ENCODE measurements at regions of chr7 and their contacts with region 1.

Region 1: DNA sequence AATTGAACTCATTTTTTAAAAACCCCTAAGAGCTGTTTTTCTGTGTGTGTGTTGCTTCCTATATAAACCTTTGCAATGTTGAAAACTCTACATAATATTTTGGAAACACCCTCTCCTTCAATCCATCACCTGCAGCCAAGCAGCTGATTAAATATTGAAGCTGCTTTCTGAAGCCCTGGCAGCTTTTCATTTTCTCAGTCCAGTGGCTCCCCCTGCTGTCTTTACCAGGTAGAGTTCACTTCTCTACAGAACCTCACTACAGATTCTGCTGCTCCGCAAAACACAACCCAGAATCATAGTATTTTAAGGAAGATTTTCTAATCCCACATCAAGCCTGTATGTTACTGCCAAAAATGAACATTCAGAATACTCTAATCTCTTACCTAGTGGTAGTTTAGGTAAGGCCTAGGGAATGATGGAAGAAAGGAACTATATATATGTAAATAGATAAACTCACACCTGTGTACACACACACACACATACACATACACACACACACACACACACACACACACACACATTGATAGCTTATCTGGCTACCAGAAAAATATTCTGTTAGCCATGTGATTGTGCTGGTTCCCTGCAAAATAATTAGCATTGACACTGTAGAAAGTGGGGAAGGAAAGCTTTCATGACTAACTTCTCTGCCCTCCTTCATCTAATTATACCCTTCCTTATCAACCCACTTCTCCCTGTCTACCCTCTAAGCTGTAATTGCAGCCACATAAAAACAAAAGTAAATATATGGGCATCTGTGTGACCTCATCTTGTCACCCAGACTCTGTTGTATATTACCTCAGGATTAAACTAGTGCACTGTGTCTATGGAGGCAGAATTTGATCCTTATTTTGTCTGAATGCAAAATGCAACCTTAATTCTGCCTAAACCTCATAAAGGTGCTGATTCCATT is 229.5 kb upstream of the FZD1 start:
- DNase-seq: peak; percentile 65
- ATAC-seq: peak; percentile 63
- H3K4me3 ChIP-seq: no peak overlapping the region
- H3K27ac ChIP-seq: no peak overlapping the region
- H3K4me1 ChIP-seq: no peaks in the 10 kb centered on the region
- H3K27me3 ChIP-seq: no peaks in the 10 kb centered on the region
- CTCF ChIP-seq: peak; percentile 81

Region 2: DNA sequence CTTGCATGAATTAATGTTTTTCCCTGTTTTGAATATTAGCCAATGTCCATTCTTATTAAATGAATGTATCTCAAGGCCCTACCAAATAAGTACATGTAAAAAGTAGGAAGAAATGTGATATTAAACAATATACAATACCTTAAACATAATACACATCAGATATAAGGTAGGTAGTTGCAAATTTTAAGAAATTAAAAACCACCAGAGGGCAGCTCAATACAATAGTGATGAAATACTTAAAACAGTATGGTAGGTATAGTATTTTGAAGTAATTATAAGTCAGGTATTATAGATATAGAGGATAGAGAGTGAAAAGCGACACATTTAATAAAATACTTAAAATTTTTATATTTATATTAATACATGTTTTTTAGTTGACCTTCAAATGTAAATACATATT is 482.2 kb before region 1 on chr7:
- CTCF ChIA-PET with region 1: no interaction called
- POLR2A ChIA-PET with region 1: no interaction called
- intact Hi-C with region 1: loop called (anchors 1 kb)
- DNase-seq: peak; percentile 61
- ATAC-seq: peak; percentile 79
- H3K4me3 ChIP-seq: no peak overlapping the region
- H3K27ac ChIP-seq: no peak overlapping the region
- H3K4me1 ChIP-seq: peaks cover 6% of the 10 kb centered on the region; the same call in 1 of the 2 replicates
- H3K27me3 ChIP-seq: no peaks in the 10 kb centered on the region
- CTCF ChIP-seq: peak; percentile 53; the same call in 1 of the 2 replicates

Region 3: GRCh38 chr7:90690159-90690858 is 344.4 kb before region 1 on chr7:
- CTCF ChIA-PET with region 1: interaction called, 4 read pairs
- POLR2A ChIA-PET with region 1: no interaction called
- intact Hi-C with region 1: loop called (anchors 10 kb)
- DNase-seq: no peak
- ATAC-seq: no peak
- H3K4me3 ChIP-seq: no peak overlapping the region
- H3K27ac ChIP-seq: no peak overlapping the region
- H3K4me1 ChIP-seq: peaks cover 12% of the 10 kb centered on the region
- H3K27me3 ChIP-seq: no peaks in the 10 kb centered on the region
- CTCF ChIP-seq: no peak

Region 4: GRCh38 chr7:90931986-90932916 is 102.5 kb before region 1 on chr7:
- CTCF ChIA-PET with region 1: no interaction called
- POLR2A ChIA-PET with region 1: no interaction called
- intact Hi-C with region 1: no loop called
- DNase-seq: no peak
- ATAC-seq: no peak
- H3K4me3 ChIP-seq: no peak overlapping the region
- H3K27ac ChIP-seq: no peak overlapping the region
- H3K4me1 ChIP-seq: no peaks in the 10 kb centered on the region
- H3K27me3 ChIP-seq: no peaks in the 10 kb centered on the region
- CTCF ChIP-seq: no peak

Region 5: DNA sequence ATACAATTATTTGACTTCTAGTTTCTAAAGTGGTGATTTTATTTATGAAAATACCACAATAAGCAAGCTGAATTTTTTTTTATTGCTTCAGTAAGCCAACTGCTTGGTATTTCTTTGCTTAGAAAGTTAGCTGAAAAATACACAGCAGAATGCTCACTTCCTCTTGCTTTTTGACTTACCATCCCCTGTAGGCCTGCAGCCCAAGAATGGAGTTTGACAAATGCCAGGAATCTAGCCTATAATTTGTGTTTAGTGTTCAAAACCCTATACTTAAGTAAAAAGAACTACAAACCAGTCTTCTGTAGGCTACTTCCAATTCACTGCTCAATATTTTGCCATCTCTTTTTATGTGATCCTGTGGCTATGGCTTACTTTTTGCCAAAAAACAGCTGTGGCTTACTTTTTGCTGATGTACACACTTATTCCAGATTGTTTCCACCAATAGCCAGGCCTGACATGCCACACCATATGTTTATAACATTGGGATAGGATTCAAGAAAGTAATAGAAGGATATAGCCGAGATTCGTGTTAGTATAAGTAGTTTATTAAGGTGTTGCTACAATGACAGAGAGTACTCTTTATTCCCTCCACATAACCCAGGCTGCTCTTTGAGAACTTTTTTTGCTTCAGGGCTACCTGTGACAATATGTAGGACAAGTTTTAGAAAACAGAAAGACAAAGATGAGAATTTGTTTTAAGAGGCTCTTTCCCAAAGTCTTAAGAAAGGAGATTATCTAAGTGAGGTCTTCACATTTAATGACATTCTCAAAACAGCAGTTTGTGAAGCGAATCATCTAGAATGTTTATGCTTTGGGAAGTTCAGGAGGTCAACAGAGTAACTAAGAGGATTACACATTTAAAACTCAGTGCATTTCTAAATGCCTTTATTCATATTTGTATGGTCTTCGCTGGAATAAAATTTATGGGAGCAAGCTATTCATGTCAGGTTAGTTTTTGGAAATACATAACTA is 34.4 kb before region 1 on chr7:
- CTCF ChIA-PET with region 1: no interaction called
- POLR2A ChIA-PET with region 1: no interaction called
- intact Hi-C with region 1: no loop called
- DNase-seq: peak; percentile 39
- ATAC-seq: peak; percentile 31
- H3K4me3 ChIP-seq: no peak overlapping the region
- H3K27ac ChIP-seq: no peak overlapping the region
- H3K4me1 ChIP-seq: peaks cover 6% of the 10 kb centered on the region; the same call in 1 of the 2 replicates
- H3K27me3 ChIP-seq: no peaks in the 10 kb centered on the region
- CTCF ChIP-seq: no peak

Measured in PC-3 (cell line).